ENCODE measurements at regions of chr16 and their contacts with region 1.

Region 1: GRCh38 chr16:72467157-72467759 is 295.3 kb upstream of the PMFBP1 start:
- DNase-seq: no peak
- H3K4me3 ChIP-seq: no peak overlapping the region
- H3K27ac ChIP-seq: no peak overlapping the region
- H3K4me1 ChIP-seq: peaks cover 0 to 10% (median 5%) of the 10 kb centered on the region in 4 donors
- H3K27me3 ChIP-seq: no peaks in the 10 kb centered on the region
- CTCF ChIP-seq: peak; percentile 34 to 65 (median 54)
- EP300 ChIP-seq: no peak
- POLR2A ChIP-seq: no peak

Region 2: DNA sequence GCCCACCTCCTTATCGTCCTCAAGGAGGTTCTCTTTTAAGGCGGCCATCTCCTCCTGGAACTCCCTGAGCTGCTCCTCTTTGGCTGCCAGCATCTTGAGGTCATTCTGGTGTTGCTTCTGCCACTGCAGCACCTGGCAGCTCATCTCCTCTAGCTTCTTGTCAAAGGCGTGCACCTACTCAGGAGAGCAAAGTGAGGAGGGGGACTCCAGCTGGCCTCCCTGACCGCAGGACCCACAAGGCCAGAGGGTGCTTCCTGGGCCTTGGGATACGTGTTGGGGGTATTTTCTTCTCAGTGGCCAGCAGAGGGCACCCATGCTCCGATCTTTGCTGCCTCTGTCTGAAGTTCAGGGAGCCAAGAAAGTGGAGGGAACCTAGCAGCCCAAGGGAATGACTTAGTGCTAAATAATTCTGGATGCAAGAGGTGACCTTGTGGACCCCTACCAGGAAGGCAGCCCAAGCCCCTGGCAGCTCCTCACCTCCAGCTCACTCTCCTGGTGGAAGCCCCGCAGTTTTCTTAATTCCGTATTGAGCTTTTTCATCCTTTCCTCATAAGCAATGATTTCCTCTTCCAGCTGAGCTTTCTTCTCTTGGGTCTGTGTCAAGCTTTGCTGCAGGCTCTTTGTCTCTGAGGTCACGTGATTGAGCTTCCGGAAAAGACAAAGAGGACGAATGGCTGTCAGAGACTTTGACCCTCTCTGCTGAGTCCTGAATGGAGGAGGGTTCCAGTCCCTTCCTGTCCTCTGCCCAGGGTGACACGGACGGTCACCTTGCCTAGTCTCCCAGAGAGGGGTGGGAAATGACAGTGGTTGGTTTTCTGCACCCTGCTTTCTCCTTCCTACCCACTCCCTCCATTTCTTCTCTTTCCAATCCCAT is 342.3 kb before region 1 on chr16:
- in situ Hi-C with region 1: loop called in 3 of 4 experiments (anchors 10 to 25 kb)
- intact Hi-C with region 1: no loop called
- DNase-seq: peak; percentile 80
- H3K4me3 ChIP-seq: no peak overlapping the region
- H3K27ac ChIP-seq: peak overlapping the region in 2 of 4 donors; percentile 27 to 36
- H3K4me1 ChIP-seq: peaks cover 0 to 11% (median 5%) of the 10 kb centered on the region in 4 donors
- H3K27me3 ChIP-seq: no peaks in the 10 kb centered on the region
- CTCF ChIP-seq: peak; percentile 65 to 80 (median 74)
- EP300 ChIP-seq: no peak
- POLR2A ChIP-seq: no peak

Region 3: DNA sequence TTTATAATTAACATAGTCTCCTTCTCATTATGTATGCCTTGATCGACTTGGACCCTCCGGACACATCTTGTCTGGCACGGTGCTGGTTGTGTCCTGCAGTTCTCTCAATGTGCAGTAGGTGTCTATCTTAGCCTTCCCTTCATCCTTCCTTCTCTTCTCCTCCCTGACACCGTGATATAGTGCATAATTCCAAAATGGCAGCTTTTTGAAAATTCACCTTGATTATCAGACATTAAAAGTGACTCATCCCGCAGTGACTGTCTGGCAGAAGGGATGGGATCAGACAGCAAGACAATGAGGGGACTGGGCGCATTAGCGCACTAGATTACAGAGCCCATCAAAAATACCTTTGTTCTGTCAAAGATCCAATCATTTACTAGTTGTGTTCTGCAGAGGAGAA is 225.3 kb before region 1 on chr16:
- in situ Hi-C with region 1: loop called (anchors 10 to 25 kb)
- intact Hi-C with region 1: no loop called
- DNase-seq: peak; percentile 19
- H3K4me3 ChIP-seq: no peak overlapping the region
- H3K27ac ChIP-seq: no peak overlapping the region
- H3K4me1 ChIP-seq: no peaks in the 10 kb centered on the region
- H3K27me3 ChIP-seq: no peaks in the 10 kb centered on the region
- CTCF ChIP-seq: peak; percentile 67 to 76 (median 75)
- EP300 ChIP-seq: no peak
- POLR2A ChIP-seq: no peak